Psoas muscle (tissue), 8 donors: ENCODE measurements at regions of chr10 and their contacts with region 1.

Region 1: GRCh38 chr10:7410862-7411670 is at the start of gene SFMBT2:
- DNase-seq: peak; percentile 64 to 77
- ATAC-seq: peak; percentile 51 to 68 (median 56)
- H3K4me3 ChIP-seq: peak within 1 kb of the TSS; percentile 77
- H3K27ac ChIP-seq: peak within 1 kb of the TSS; percentile 81
- H3K4me1 ChIP-seq: peaks cover 16% of the 10 kb centered on the region
- H3K27me3 ChIP-seq: peaks cover 0 to 8% (median 5%) of the 10 kb centered on the region in 3 donors
- CTCF ChIP-seq: peak; percentile 5
- total RNA-seq, gene SFMBT2: 3.0 to 8.2 (median 5.0) TPM

Region 2: GRCh38 chr10:6667679-6668270 is 743.3 kb before region 1 on chr10:
- intact Hi-C with region 1: loop called (anchors 10 kb)
- DNase-seq: no peak
- ATAC-seq: peak; percentile 75 to 88 (median 80)
- H3K4me3 ChIP-seq: peak overlapping the region; percentile 8
- H3K27ac ChIP-seq: no peak overlapping the region
- H3K4me1 ChIP-seq: peaks cover 3% of the 10 kb centered on the region
- H3K27me3 ChIP-seq: no peaks in the 10 kb centered on the region
- CTCF ChIP-seq: peak; percentile 64

Region 3: DNA sequence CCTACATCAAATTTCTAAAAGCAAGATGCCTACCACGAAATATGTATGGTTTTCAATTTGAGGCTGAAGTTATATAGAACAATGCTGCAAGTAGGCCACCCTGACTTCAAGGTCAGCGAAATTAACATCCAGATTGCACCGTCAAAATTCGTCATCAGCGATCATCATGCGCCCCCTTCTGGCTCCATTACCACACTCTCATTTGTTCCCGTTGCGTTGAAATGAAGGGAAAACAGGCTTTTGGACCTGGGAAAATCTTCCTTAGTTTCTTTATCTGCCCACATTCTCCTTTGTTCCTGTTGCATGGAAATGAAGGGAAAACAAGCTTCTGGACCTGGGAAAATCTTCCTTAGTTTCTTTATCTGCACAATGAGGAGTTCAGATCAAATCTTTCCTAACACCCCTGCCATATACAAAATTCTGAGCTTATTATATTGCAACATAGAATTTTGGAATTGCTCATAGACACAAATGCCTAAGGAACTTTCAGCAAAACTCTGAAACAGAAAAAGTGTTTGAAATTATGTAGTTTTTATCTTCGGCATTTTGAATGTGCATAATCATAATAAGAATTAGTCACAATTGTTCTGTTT is 732.8 kb before region 1 on chr10:
- intact Hi-C with region 1: loop called in 1 of 2 experiments (anchors 10 kb)
- DNase-seq: peak in 1 of 2 donors; percentile 20
- ATAC-seq: peak in 3 of 4 donors; percentile 75 to 83 (median 76)
- H3K4me3 ChIP-seq: no peak overlapping the region
- H3K27ac ChIP-seq: no peak overlapping the region
- H3K4me1 ChIP-seq: no peaks in the 10 kb centered on the region
- H3K27me3 ChIP-seq: no peaks in the 10 kb centered on the region
- CTCF ChIP-seq: peak; percentile 58

Region 4: DNA sequence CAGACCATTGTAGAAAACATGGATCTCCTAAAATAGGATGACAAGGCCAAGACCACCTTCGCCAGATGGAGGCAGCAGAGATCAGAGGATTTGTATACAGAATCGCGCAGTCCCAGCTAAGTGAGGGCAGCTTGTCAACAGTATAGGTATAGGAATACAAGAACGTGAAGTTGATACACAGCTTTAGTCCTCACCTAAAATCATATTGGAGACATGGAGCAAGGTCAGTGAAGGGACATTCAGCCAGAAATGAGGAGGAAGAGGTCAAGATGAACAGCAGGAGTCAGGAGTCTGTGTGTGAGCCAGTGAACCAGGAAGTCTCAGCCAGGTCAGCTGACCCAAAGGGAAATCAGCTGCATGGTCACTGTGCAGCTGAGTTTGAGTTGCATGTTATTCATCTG is 567.6 kb before region 1 on chr10:
- intact Hi-C with region 1: loop called in 1 of 2 experiments (anchors 10 kb)
- DNase-seq: no peak
- ATAC-seq: no peak
- H3K4me3 ChIP-seq: no peak overlapping the region
- H3K27ac ChIP-seq: no peak overlapping the region
- H3K4me1 ChIP-seq: no peaks in the 10 kb centered on the region
- H3K27me3 ChIP-seq: no peaks in the 10 kb centered on the region
- CTCF ChIP-seq: no peak

Region 5: DNA sequence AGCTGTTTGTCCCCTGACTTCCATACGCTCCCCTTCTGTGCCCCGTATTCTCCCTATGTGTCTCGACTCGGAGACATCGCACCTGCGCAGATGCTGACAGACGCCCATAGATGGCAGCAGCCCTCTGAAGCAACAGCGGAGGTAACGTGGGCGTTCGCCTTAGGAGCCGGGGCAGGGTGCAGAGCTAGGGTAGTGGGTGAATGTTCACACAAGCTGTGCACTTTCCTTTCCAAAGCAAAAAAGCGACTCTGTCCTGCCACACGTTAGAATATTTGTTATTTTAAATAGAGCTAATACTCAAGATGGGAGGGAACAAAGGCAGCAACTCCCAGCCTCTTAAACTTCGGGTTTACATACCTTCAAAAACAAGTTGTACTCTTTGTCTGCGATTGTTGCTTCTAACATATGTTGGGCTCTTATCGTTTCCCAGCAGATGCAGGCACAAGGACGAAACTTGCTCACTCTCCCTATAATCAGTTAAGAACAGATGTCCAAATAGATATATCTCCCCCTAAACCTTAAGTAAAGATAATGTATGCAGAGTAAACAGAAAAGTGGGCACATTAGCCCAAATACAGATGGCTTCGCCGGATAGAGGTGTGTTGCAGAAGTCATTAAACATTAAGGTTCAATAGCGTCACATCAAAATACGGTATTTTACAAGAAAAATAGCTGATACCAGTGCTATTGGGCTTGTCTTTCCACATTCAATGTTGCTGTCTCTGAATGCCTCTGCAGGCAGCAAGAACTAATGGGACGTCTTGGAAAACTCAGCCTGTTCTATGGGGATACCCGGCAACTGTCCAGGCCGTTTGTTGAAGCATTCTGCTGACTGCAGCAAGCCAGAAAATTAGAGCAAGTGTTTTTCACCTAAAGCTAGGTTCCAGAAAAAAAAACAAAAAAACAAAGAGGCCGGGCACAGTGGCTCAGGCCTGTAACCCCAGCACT is 490.7 kb before region 1 on chr10:
- intact Hi-C with region 1: loop called (anchors 5 to 10 kb)
- DNase-seq: peak; percentile 61 to 79
- ATAC-seq: peak; percentile 74 to 92 (median 90)
- H3K4me3 ChIP-seq: no peak overlapping the region
- H3K27ac ChIP-seq: no peak overlapping the region
- H3K4me1 ChIP-seq: no peaks in the 10 kb centered on the region
- H3K27me3 ChIP-seq: no peaks in the 10 kb centered on the region
- CTCF ChIP-seq: peak; percentile 62

Region 6: GRCh38 chr10:7260412-7260900 is 150.6 kb before region 1 on chr10:
- intact Hi-C with region 1: loop called (anchors 2 to 5 kb)
- DNase-seq: peak; percentile 64 to 79
- ATAC-seq: peak; percentile 97 to 99 (median 98)
- H3K4me3 ChIP-seq: no peak overlapping the region
- H3K27ac ChIP-seq: peak overlapping the region; percentile 76
- H3K4me1 ChIP-seq: peaks cover 8% of the 10 kb centered on the region
- H3K27me3 ChIP-seq: no peaks in the 10 kb centered on the region
- CTCF ChIP-seq: peak; percentile 72